ENCODE measurements at regions of chr1 and their contacts with region 1.

Region 1: DNA sequence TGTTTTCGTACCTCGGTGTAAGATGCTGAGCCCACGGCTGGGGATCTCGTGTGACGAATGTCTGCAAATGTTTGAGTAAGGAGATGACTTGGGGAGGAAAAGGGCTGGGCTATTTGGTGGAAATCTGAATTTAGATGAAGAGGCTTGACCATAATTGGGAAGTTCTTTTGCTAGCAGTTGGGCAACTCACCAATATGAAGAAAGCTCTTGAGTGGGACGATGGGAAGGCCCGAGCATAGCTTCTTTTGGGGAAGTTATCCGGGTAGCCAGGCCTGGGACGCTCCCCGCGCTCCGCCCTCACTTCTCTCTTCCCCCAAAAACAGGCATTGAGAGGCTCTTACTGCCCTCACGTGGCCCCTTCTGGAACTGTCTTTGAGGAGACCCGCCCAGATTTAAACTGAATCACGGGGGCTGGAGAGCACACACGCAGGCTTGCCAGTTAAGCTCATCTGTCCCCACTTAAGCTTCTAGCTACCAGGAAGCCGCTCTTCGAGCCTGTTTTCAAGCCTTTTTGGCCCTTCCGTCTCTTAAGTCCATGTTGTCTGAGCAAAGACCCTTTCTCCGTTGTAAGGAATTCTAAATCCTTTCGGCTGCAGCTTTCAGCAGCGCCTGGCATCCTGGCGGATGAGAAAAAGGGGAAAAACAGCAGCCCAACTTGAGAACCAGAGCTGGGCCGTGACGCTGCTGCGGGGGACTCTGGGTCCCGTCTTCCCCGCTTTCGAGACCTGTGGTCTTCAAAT is 93.1 kb downstream of the NID1 start:
- DNase-seq: peak; percentile 85
- H3K4me3 ChIP-seq: peak overlapping the region; percentile 20 to 36
- H3K27ac ChIP-seq: peak overlapping the region; percentile 87 to 98
- H3K4me1 ChIP-seq: peaks cover 3 to 10% of the 10 kb centered on the region in 2 experiments
- H3K27me3 ChIP-seq: no peaks in the 10 kb centered on the region
- CTCF ChIP-seq: peak; percentile 88
- EP300 ChIP-seq: peak in 1 of 2 experiments; percentile 26; a peak in 2 of 4 replicates
- RAD21 ChIP-seq: peak; percentile 96

Region 2: GRCh38 chr1:235783148-235783776 is 188.5 kb before region 1 on chr1:
- CTCF ChIA-PET with region 1: interaction called, 16 read pairs
- POLR2A ChIA-PET with region 1: no interaction called
- DNase-seq: peak; percentile 27
- H3K4me3 ChIP-seq: no peak overlapping the region
- H3K27ac ChIP-seq: peak overlapping the region in 1 of 2 experiments; percentile 48; a peak in 1 of 4 replicates
- H3K4me1 ChIP-seq: peaks cover 4 to 5% of the 10 kb centered on the region in 2 experiments; a peak in 2 of 4 replicates
- H3K27me3 ChIP-seq: no peaks in the 10 kb centered on the region
- CTCF ChIP-seq: peak; percentile 63
- EP300 ChIP-seq: no peak
- RAD21 ChIP-seq: peak; percentile 82

Region 3: DNA sequence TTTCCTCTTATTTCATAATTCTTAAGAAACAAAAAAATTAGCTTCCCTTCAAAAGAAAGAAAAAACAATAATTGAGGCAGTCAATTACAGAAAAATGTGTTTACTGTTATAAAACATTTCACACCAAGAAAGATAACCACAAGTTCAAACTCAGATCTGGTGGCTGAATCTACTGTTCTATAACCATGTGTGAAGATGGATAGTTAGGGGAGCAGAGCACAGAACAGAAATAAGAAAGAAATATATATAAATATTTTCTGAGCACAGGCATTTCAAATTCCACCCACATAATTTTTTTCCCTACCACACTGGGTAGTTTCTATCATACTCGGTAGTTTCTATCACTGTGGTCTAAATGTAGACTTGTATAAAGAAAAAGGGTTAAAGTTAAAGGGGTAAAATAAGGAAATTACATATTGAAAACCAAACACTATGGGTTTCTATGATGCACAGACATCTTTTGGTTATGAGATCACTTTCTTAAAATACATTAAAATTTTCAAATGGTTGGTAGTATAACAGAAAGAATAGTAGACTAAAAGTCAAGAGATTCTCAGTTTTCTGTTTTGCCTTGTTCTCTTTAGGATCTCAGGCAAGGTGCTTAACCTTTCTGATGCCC is 115.8 kb before region 1 on chr1:
- CTCF ChIA-PET with region 1: interaction called, 13 read pairs
- POLR2A ChIA-PET with region 1: no interaction called
- DNase-seq: no peak
- H3K4me3 ChIP-seq: no peak overlapping the region
- H3K27ac ChIP-seq: peak overlapping the region in 1 of 2 experiments; percentile 59; a peak in 2 of 4 replicates
- H3K4me1 ChIP-seq: no peaks in the 10 kb centered on the region; a peak in 1 of 4 replicates
- H3K27me3 ChIP-seq: no peaks in the 10 kb centered on the region
- CTCF ChIP-seq: no peak
- EP300 ChIP-seq: no peak
- RAD21 ChIP-seq: no peak

Region 4: DNA sequence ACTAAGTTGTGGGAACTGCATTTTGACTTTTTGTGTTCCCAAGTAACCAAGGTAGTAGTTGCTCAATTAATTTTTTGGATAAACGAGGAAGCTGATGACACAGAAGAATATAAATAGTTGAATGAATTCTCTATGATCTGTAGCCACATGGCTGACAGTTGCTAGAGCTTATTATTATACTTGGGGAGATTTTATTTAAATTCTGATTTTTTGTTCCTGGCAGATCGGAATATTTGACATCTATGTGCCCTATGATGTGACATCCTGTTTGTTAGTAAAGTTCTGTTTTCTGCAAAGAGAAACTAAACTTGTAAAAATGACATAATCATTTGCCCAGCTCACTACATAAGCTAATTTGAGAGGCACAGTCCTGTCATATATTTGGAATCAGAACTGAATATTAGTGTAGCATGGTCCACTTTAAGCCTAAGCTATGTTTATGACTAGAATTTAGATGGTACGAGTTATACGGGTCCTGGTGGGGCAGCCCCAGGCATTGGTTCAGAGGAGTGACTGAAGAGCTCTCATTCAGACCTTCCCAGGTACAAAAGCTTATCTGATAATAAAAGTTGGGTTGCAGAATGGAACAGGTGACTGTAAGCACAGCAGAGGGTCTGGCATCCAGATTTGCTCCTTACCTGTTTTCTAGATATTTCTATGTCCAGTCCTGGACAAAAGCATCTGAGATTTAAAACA is 95.2 kb before region 1 on chr1:
- CTCF ChIA-PET with region 1: interaction called, 13 read pairs
- POLR2A ChIA-PET with region 1: no interaction called
- DNase-seq: no peak
- H3K4me3 ChIP-seq: no peak overlapping the region
- H3K27ac ChIP-seq: no peak overlapping the region
- H3K4me1 ChIP-seq: peaks cover 0 to 2% of the 10 kb centered on the region in 2 experiments; a peak in 1 of 4 replicates
- H3K27me3 ChIP-seq: no peaks in the 10 kb centered on the region
- CTCF ChIP-seq: no peak
- EP300 ChIP-seq: no peak
- RAD21 ChIP-seq: no peak

Region 5: DNA sequence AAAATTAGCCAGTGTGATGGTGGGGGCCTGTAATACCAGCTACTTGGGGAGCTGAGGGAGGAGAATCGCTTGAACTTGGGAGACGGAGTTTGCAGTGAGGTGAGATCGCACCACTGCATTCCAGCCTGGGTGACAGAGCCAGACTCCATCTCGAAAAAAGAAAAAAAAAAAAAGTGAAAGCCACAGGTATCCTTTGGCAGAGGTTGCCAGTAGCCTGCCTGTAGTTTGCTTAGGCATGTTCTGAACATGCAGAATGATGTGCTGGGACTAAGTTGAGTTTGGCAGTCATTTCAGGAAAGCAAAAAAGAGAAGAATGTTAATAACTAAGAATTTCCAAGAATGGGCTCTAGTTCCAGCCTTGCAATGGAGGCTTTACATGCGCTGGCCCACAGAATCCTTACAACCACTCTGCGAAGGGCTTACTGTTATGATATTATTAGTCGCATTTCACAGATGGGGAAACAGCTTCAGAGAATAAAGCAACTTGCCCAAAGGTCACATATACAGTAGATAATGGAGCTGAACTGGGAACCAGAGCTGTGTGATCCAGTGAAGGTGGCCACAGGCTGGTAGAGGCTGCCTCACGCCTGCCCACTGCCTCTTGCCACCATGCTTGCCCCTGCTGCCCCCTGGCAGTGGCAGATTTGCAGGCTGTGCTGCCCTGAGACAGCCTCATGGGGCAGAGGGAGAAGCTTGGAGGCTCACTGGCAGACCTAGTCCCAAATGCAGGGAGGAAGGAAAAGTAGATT is 38.5 kb before region 1 on chr1:
- CTCF ChIA-PET with region 1: interaction called, 14 read pairs
- POLR2A ChIA-PET with region 1: no interaction called
- DNase-seq: no peak
- H3K4me3 ChIP-seq: no peak overlapping the region
- H3K27ac ChIP-seq: no peak overlapping the region
- H3K4me1 ChIP-seq: no peaks in the 10 kb centered on the region; a peak in 1 of 4 replicates
- H3K27me3 ChIP-seq: no peaks in the 10 kb centered on the region
- CTCF ChIP-seq: no peak
- EP300 ChIP-seq: no peak
- RAD21 ChIP-seq: no peak

Region 6: GRCh38 chr1:235954306-235955283 is 17.1 kb before region 1 on chr1:
- CTCF ChIA-PET with region 1: interaction called, 70 read pairs
- POLR2A ChIA-PET with region 1: no interaction called
- DNase-seq: no peak
- H3K4me3 ChIP-seq: no peak overlapping the region
- H3K27ac ChIP-seq: peak overlapping the region in 1 of 2 experiments; percentile 71; a peak in 3 of 4 replicates
- H3K4me1 ChIP-seq: no peaks in the 10 kb centered on the region
- H3K27me3 ChIP-seq: no peaks in the 10 kb centered on the region
- CTCF ChIP-seq: no peak
- EP300 ChIP-seq: no peak
- RAD21 ChIP-seq: no peak